Transverse colon (tissue), 4 donors: ENCODE measurements at regions of chr17 and their contacts with region 1.

Region 1: GRCh38 chr17:76239538-76240274 is 587 bp downstream of the RNF157 start:
- DNase-seq: no peak
- H3K4me3 ChIP-seq: peak overlapping the region; percentile 61 to 63 (median 62)
- H3K27ac ChIP-seq: peak overlapping the region; percentile 78 to 81 (median 79)
- H3K4me1 ChIP-seq: peaks cover 11 to 33% (median 15%) of the 10 kb centered on the region in 4 donors
- H3K27me3 ChIP-seq: peaks cover 14% of the 10 kb centered on the region
- CTCF ChIP-seq: no peak
- EP300 ChIP-seq: no peak
- POLR2A ChIP-seq: no peak

Region 2: DNA sequence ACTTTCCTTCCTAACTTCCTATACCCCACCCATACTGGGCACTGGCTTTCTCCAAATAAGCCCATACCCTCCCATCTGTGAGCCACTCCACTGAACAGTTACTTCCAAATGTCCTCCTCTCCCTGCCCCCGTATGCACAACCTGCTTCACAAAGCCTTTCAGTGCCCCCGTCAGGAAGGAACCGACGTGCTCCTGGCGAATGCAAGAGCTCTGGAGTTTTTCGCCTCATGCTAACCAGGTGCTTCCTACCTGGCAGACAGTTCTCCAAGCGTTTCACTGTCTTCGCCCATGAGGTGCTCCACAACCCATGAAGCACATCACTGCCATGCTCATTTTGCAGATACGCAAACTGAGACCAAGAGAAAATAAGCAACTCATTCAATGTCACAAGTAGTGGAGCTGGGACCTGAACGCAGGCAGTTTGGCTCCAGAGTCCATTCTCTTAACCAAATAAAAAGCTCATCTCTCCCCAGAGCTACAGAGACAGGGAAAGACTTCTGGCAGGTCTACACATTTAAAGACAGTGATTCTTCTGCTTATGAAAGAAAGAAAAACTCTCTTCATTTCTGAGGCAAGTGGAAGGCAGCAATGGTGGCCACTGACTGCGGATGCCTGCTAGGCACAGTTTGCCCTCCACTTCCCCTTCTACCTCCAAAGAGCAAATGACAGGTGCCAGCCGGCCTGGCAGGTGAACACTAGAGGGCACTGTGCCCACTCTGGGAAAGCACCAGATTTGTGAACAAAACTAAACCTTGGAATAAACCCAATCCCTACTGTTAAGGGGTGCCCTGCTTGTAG is 168.5 kb after region 1 on chr17:
- in situ Hi-C with region 1: no loop called
- intact Hi-C with region 1: loop called (anchors 10 kb)
- DNase-seq: peak; percentile 77
- H3K4me3 ChIP-seq: no peak overlapping the region
- H3K27ac ChIP-seq: no peak overlapping the region
- H3K4me1 ChIP-seq: peaks cover 0 to 10% (median 3%) of the 10 kb centered on the region in 4 donors
- H3K27me3 ChIP-seq: no peaks in the 10 kb centered on the region
- CTCF ChIP-seq: peak; percentile 62 to 86 (median 72)
- EP300 ChIP-seq: no peak
- POLR2A ChIP-seq: no peak